Common myeloid progenitor, CD34-positive (primary cell): ENCODE measurements at regions of chr3 and their contacts with region 1.

Region 1: DNA sequence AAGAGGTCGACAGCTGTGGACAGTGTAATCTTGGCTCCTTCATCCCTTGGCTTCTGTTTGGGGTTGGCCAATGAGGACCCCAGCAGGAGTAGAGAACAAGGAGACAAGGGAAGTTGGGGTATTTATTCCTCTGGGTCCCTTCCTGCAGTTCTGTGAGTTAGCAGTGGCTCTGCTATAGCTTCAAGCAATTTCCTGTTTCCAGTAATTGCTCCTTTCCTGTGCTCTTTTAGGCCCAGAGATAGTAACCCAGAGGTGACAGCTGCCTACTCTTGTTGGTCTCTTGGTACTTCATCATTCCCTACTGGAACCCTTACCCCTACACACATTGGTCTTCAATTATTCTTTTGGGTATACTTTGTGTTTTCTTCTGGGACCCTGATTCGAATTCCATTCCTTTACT is 92.9 kb downstream of the NR1D2 start:
- DNase-seq: no peak
- H3K4me3 ChIP-seq: no peak overlapping the region
- H3K27ac ChIP-seq: no peak overlapping the region
- H3K4me1 ChIP-seq: peaks cover 4 to 29% (median 13%) of the 10 kb centered on the region in 4 experiments
- H3K27me3 ChIP-seq: no peaks in the 10 kb centered on the region

Region 2: GRCh38 chr3:22542311-22542710 is 1495.7 kb before region 1 on chr3:
- CTCF ChIA-PET with region 1: no interaction called
- POLR2A ChIA-PET with region 1: interaction called, 10 read pairs
- DNase-seq: no peak
- H3K4me3 ChIP-seq: no peak overlapping the region
- H3K27ac ChIP-seq: no peak overlapping the region
- H3K4me1 ChIP-seq: peaks cover 0 to 3% (median 0%) of the 10 kb centered on the region in 4 experiments
- H3K27me3 ChIP-seq: no peaks in the 10 kb centered on the region

Region 3: DNA sequence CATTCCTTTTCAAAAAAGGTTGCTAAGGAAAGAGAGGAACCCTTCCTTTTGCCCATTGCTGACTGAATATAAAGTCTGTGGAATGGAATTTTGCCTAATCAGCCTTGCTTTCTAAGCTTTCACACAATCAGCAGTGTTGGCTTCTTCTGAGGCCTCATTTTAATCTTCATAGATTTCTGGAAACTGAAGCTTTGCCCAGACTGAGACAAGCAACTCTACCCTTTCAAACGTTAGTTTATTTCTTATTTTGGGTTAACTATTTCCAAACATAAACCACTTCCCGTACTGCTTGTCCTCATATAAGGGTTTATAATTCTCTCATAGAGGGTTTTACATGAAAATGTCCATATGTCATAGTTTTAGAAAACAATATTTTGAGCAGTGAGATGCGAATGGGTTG is 10.0 kb before region 1 on chr3:
- CTCF ChIA-PET with region 1: no interaction called
- POLR2A ChIA-PET with region 1: no interaction called
- DNase-seq: no peak
- H3K4me3 ChIP-seq: no peak overlapping the region
- H3K27ac ChIP-seq: no peak overlapping the region
- H3K4me1 ChIP-seq: no peaks in the 10 kb centered on the region
- H3K27me3 ChIP-seq: no peaks in the 10 kb centered on the region

Region 4: GRCh38 chr3:24048843-24049242 is 10.9 kb after region 1 on chr3:
- CTCF ChIA-PET with region 1: no interaction called
- POLR2A ChIA-PET with region 1: no interaction called
- DNase-seq: no peak
- H3K4me3 ChIP-seq: no peak overlapping the region
- H3K27ac ChIP-seq: no peak overlapping the region
- H3K4me1 ChIP-seq: no peaks in the 10 kb centered on the region
- H3K27me3 ChIP-seq: no peaks in the 10 kb centered on the region